HCT116 (cell line): ENCODE measurements at regions of chr3 and their contacts with region 1.

Region 1: GRCh38 chr3:170180908-170181879 is at the start of gene PHC3:
- DNase-seq: peak; percentile 75
- ATAC-seq: peak; percentile 89
- H3K4me3 ChIP-seq: peak within 1 kb of the TSS; percentile 88 to 94
- H3K27ac ChIP-seq: peak within 1 kb of the TSS; percentile 57
- H3K4me1 ChIP-seq: peaks cover 8 to 19% of the 10 kb centered on the region in 2 experiments
- H3K27me3 ChIP-seq: no peaks in the 10 kb centered on the region
- CTCF ChIP-seq: no peak
- POLR2A ChIP-seq: peak; percentile 47
- RAD21 ChIP-seq: no peak
- total RNA-seq, gene PHC3: 40.1 TPM

Region 2: GRCh38 chr3:170221924-170222646 is 40.9 kb after region 1 on chr3 and contains the start of gene PRKCI:
- CTCF ChIA-PET with region 1: no interaction called
- POLR2A ChIA-PET with region 1: no interaction called
- RAD21 ChIA-PET with region 1: no interaction called
- intact Hi-C with region 1: loop called (anchors 5 kb)
- DNase-seq: peak; percentile 97
- ATAC-seq: peak; percentile 96
- H3K4me3 ChIP-seq: peak within 1 kb of the TSS; percentile 58 to 84
- H3K27ac ChIP-seq: peak within 1 kb of the TSS; percentile 67
- H3K4me1 ChIP-seq: peaks cover 0 to 22% of the 10 kb centered on the region in 2 experiments; a peak in 3 of 4 replicates
- H3K27me3 ChIP-seq: no peaks in the 10 kb centered on the region
- CTCF ChIP-seq: no peak
- POLR2A ChIP-seq: peak; percentile 65
- RAD21 ChIP-seq: no peak
- total RNA-seq, gene PRKCI: 25.2 TPM